Left lung (tissue), 14 donors: ENCODE measurements at regions of chr13 and their contacts with region 1.

Region 1: DNA sequence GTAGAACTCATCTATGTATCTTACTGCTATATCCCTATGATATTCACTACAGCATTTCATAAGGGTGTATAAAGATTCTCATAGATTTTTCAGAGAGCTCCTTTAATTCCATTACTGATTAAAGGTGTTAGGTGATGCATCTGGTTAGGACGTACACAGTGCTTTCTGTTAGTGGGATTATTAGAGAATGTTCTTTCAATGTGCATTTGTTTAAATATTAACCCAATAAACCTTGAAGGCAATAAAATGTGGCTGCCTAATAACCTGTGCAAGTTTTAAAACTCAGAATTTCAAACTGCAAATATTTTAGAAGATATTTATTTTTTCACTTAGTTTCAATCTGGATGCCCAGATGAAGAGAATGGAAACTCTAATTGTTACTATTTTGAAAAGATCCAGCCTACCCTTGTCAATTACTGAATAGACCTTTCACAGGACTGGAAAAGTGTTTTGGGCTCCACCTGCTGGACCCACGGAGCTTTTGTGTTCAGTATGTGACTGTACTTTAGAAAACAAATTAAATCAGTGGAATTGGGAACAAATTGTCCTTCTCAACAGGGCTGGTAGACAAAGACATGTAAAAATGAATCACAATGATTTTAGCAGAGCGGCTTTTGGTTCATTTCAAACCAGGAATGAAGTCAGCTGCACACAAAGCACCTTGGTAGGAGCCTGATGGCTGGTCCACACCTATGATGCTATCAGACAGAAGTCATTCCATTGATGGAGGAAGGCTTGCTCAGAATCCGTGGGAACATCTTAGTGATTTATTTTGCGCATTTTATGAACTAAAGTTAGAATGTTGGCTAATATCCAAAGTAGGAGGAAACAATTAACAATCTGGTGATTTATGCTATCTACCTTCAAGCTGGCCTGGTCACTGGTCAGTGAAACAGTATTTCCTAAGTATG is 89.4 kb upstream of the RAP2A start:
- DNase-seq: peak in 2 of 4 donors; percentile 38 to 57
- ATAC-seq: peak; percentile 83
- H3K4me3 ChIP-seq: no peak overlapping the region
- H3K27ac ChIP-seq: no peak overlapping the region
- H3K4me1 ChIP-seq: peaks cover 0 to 10% of the 10 kb centered on the region in 2 donors
- H3K27me3 ChIP-seq: no peaks in the 10 kb centered on the region
- CTCF ChIP-seq: peak; percentile 49 to 50

Region 2: GRCh38 chr13:96730676-96731075 is 613.8 kb before region 1 on chr13:
- intact Hi-C with region 1: no loop called
- DNase-seq: no peak
- ATAC-seq: no peak
- H3K4me3 ChIP-seq: no peak overlapping the region
- H3K27ac ChIP-seq: no peak overlapping the region
- H3K4me1 ChIP-seq: no peaks in the 10 kb centered on the region
- H3K27me3 ChIP-seq: no peaks in the 10 kb centered on the region
- CTCF ChIP-seq: no peak

Region 3: DNA sequence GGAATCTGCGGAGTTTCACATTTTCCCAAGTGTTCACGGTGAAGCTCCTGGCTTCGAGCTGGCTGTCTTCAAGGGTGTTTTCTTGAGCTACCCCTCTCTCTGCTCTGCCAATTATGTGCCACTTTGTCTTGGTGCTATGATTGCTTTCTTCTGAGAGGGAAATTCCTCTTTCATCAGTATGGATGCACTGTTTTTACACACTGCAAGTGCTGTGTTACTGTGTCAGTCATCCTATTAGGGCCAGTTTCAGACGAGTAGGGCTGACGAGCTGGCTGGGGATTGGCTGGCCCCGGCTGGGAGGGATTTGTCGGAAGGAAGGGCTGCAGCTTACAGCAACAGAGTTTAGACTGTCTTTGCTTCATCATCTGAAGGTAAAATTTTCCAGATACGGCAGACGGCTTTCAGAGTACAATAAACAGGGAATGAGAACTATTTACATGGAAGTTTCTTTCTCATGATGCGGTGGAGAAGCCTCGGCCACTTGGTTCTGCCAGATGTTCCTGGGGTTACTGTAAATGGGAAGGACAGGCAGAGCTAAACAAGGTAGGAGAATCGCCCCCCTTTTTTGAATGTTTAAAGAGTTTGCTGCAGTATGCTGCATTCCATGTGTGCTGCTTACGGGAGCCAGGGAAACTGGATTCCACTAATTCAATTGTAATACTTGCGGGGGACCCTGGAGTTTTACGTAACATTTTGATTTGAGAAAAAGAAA is 122.4 kb before region 1 on chr13 and contains the start of gene MBNL2:
- intact Hi-C with region 1: loop called in 1 of 2 experiments (anchors 10 kb)
- DNase-seq: peak; percentile 89 to 95 (median 94)
- ATAC-seq: peak; percentile 92
- H3K4me3 ChIP-seq: peak within 1 kb of the TSS; percentile 53 to 54
- H3K27ac ChIP-seq: peak within 1 kb of the TSS; percentile 88 to 98
- H3K4me1 ChIP-seq: peaks cover 17 to 45% of the 10 kb centered on the region in 2 donors
- H3K27me3 ChIP-seq: no peaks in the 10 kb centered on the region
- CTCF ChIP-seq: no peak
- polyA plus RNA-seq, gene MBNL2: 83.2 to 105 (median 96.0) TPM